MCF 10A (cell line): ENCODE measurements at regions of chr12 and their contacts with region 1.

Region 1: GRCh38 chr12:95998611-95999286 is 2.6 kb upstream of the HAL start:
- DNase-seq: peak; percentile 68
- H3K4me3 Mint-ChIP-seq: no peak overlapping the region
- H3K27ac Mint-ChIP-seq: no peak overlapping the region
- H3K4me1 Mint-ChIP-seq: peaks cover 21% of the 10 kb centered on the region
- H3K27me3 Mint-ChIP-seq: no peaks in the 10 kb centered on the region
- CTCF ChIP-seq: peak; percentile 57

Region 2: GRCh38 chr12:95820102-95820703 is 178.5 kb before region 1 on chr12:
- CTCF ChIA-PET with region 1: interaction called, 20 read pairs
- POLR2A ChIA-PET with region 1: no interaction called
- intact Hi-C with region 1: loop called (anchors 5 kb)
- DNase-seq: peak; percentile 73
- H3K4me3 Mint-ChIP-seq: no peak overlapping the region
- H3K27ac Mint-ChIP-seq: no peak overlapping the region
- H3K4me1 Mint-ChIP-seq: no peaks in the 10 kb centered on the region
- H3K27me3 Mint-ChIP-seq: peaks cover 12% of the 10 kb centered on the region
- CTCF ChIP-seq: peak; percentile 47

Region 3: GRCh38 chr12:95918194-95918993 is 80.4 kb before region 1 on chr12:
- CTCF ChIA-PET with region 1: interaction called, 177 read pairs
- POLR2A ChIA-PET with region 1: interaction called, 5 read pairs
- intact Hi-C with region 1: loop called (anchors 2 kb)
- DNase-seq: peak; percentile 67
- H3K4me3 Mint-ChIP-seq: no peak overlapping the region
- H3K27ac Mint-ChIP-seq: no peak overlapping the region
- H3K4me1 Mint-ChIP-seq: no peaks in the 10 kb centered on the region
- H3K27me3 Mint-ChIP-seq: no peaks in the 10 kb centered on the region
- CTCF ChIP-seq: peak; percentile 69

Region 4: DNA sequence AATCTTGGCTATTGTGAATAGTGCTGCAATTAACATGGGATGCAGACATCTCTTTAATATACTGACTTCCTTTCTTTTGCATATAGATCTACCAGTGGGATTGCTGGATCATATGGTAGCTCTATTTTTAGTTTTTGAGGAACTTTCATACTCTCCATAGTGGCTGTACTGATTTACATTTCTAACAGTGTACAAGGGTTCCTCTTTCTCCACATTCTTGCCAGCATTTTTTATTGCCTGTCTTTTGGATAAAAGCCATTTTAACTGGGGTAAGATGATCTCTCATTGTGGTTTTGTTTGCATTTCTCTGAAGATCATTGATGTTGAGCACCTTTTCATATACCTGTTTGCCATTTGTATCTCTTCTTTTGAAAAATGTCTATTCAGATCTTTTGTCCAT is 47.2 kb before region 1 on chr12:
- CTCF ChIA-PET with region 1: interaction called, 18 read pairs
- POLR2A ChIA-PET with region 1: interaction called, 3 read pairs
- intact Hi-C with region 1: no loop called
- DNase-seq: no peak
- H3K4me3 Mint-ChIP-seq: no peak overlapping the region
- H3K27ac Mint-ChIP-seq: no peak overlapping the region
- H3K4me1 Mint-ChIP-seq: no peaks in the 10 kb centered on the region
- H3K27me3 Mint-ChIP-seq: peaks cover 41% of the 10 kb centered on the region
- CTCF ChIP-seq: no peak

Region 5: GRCh38 chr12:96015672-96016071 is 16.9 kb after region 1 on chr12:
- CTCF ChIA-PET with region 1: interaction called, 17 read pairs
- POLR2A ChIA-PET with region 1: interaction called, 3 read pairs
- intact Hi-C with region 1: no loop called
- DNase-seq: peak; percentile 43
- H3K4me3 Mint-ChIP-seq: no peak overlapping the region
- H3K27ac Mint-ChIP-seq: no peak overlapping the region
- H3K4me1 Mint-ChIP-seq: no peaks in the 10 kb centered on the region
- H3K27me3 Mint-ChIP-seq: no peaks in the 10 kb centered on the region
- CTCF ChIP-seq: peak; percentile 9

Region 6: DNA sequence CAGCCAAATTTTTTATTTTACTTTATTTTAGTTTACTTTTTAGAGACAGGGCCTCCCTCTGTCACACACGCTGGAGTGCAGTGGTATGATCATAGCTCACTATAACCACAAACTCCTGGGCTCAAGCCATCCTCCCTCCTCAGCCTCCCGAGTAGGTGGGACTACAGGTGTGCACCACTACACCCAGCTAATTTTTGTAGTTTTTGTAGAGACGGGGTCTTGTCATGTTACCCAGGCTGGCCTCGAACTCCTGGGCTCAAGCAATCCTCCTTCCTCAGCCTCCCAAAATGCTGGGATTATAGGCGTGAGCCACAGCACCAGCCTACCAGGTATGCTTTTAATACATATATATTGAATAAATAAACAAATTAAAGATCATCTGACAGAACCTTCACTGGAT is 69.4 kb after region 1 on chr12:
- CTCF ChIA-PET with region 1: no interaction called
- POLR2A ChIA-PET with region 1: no interaction called
- intact Hi-C with region 1: no loop called
- DNase-seq: no peak
- H3K4me3 Mint-ChIP-seq: no peak overlapping the region
- H3K27ac Mint-ChIP-seq: no peak overlapping the region
- H3K4me1 Mint-ChIP-seq: peaks cover 8% of the 10 kb centered on the region
- H3K27me3 Mint-ChIP-seq: no peaks in the 10 kb centered on the region
- CTCF ChIP-seq: no peak